ENCODE measurements at regions of chr11 and their contacts with region 1.

Region 1: DNA sequence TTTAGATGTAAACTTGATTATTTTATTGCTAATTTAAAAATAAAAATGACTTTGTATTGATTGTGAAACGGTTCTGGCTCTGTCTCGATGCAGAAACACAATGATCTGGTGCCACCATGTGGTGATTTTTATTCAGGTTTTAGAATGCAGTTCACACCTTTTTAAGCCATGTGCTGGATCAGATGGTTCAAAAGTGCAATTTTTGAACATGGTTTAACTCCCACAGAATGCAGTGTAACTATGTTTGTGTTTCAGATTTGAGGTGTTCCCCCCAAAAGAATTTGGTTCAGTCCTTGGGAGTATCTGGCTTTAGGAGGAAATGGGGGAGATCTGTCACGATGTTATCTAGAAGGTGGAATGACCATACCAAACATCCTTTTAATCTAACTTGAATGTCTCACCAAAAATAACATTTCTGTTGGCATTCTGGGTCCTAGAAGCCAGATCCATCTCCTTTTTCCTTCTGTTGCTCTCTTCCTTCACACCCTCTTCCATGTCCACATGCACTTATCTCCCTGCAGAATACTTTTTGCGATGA is 7.9 kb downstream of the MRPL16 start:
- DNase-seq: no peak
- H3K4me3 ChIP-seq: no peak overlapping the region
- H3K27ac ChIP-seq: no peak overlapping the region
- H3K27me3 ChIP-seq: no peaks in the 10 kb centered on the region
- CTCF ChIP-seq: peak; percentile 67

Region 2: GRCh38 chr11:59787816-59788215 is 14.9 kb before region 1 on chr11:
- CTCF ChIA-PET with region 1: interaction called, 44 read pairs
- POLR2A ChIA-PET with region 1: no interaction called
- DNase-seq: no peak
- H3K4me3 ChIP-seq: no peak overlapping the region
- H3K27ac ChIP-seq: peak overlapping the region; percentile 40
- H3K27me3 ChIP-seq: no peaks in the 10 kb centered on the region
- CTCF ChIP-seq: no peak

Region 3: DNA sequence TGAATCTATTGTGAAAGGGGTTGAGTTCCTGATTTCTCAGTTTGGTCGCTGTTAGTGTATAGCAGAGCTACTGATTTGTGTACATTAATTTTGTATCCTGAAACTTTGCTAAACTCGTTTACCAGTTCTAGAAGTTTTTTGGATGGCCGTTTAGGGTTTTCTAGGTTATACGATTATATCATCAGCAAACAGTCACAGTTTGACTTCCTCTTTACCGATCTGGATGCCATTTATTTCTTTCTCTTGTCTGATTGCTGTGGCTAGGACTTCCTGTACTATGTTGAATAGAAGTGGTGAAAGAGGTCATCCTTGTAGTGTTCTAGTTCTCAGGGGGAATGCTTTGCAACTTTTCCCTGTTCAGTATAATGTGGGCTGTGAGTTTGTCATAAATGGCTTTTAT is 189.7 kb after region 1 on chr11:
- CTCF ChIA-PET with region 1: no interaction called
- POLR2A ChIA-PET with region 1: no interaction called
- DNase-seq: no peak
- H3K4me3 ChIP-seq: no peak overlapping the region
- H3K27ac ChIP-seq: no peak overlapping the region
- H3K27me3 ChIP-seq: no peaks in the 10 kb centered on the region
- CTCF ChIP-seq: no peak